Activated CD4-positive, alpha-beta T cell treated with anti-CD3 and anti-CD28 coated beads, Interleukin-2, amount 10 ng/mL, durations not matched to agents 24 days and 14 days (primary cell): ENCODE measurements at regions of chr4 and their contacts with region 1.

Region 1: DNA sequence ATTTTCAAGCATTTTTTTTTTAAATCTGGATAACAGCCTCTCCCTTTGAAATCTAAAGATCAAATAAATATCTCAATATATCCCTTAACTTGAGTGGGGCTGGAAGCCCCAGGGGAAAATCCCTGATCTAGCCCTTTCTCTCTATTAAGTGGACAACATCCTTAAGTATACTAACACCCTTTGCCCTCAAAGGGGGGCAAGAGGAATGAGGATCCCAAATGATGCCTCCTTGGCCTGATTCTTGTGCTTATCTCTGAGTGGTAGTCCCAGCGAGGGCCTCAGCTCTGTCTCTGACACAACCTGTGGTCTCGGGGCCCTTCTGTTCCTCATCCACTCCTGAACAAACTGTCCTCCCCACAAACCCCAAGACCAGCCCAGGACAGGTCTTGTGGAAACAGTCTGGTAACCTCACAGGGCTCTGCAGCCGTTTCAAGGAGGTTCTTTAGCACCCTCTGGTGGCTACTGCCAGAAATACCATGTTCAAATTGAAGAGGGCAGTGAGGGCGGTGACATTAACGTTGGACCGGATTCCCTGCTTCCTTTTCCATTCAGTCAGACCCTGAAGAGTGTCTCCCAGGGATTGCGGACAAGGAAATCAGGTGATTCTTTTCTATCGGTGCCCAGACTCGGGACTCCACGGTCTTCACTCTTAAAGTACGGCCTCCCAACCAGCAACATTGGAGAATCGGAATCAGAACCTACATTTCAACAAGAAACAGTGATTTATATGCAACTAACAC is 12.9 kb downstream of the CXCL13 start:
- DNase-seq: peak; percentile 89
- H3K4me3 Mint-ChIP-seq: no peak overlapping the region
- H3K27ac Mint-ChIP-seq: peak overlapping the region; percentile 39
- H3K4me1 Mint-ChIP-seq: peaks cover 17% of the 10 kb centered on the region
- H3K27me3 Mint-ChIP-seq: peaks cover 18% of the 10 kb centered on the region

Region 2: DNA sequence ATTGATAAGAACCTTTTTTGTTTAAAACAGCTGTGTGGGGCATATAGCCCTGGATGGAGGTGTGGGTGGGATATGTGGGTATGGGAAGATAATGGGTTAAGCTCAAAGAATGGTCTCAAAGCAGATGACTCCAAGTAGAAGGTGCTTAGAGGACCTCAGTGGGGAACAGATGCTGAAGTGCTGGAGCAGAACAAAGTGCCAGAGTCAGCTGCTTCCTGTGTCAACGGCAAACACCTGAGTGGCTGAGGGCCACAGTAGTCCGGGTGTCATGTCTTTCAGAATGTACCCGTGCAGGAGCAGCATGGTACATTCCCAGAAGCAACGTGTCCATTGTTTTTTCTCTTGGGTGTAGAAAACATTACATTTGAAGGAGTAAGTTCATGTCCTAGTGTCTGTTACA is 250.9 kb before region 1 on chr4:
- intact Hi-C with region 1: loop called (anchors 5 kb)
- DNase-seq: no peak
- H3K4me3 Mint-ChIP-seq: no peak overlapping the region
- H3K27ac Mint-ChIP-seq: no peak overlapping the region
- H3K4me1 Mint-ChIP-seq: peaks cover 2% of the 10 kb centered on the region
- H3K27me3 Mint-ChIP-seq: peaks cover 8% of the 10 kb centered on the region

Region 3: GRCh38 chr4:77385124-77385969 is 233.2 kb before region 1 on chr4:
- intact Hi-C with region 1: loop called (anchors 1 kb)
- DNase-seq: peak; percentile 86
- H3K4me3 Mint-ChIP-seq: no peak overlapping the region
- H3K27ac Mint-ChIP-seq: no peak overlapping the region
- H3K4me1 Mint-ChIP-seq: peaks cover 6% of the 10 kb centered on the region
- H3K27me3 Mint-ChIP-seq: peaks cover 4% of the 10 kb centered on the region

Region 4: GRCh38 chr4:77433418-77433733 is 185.2 kb before region 1 on chr4:
- intact Hi-C with region 1: loop called (anchors 1 kb)
- DNase-seq: peak; percentile 80
- H3K4me3 Mint-ChIP-seq: no peak overlapping the region
- H3K27ac Mint-ChIP-seq: no peak overlapping the region
- H3K4me1 Mint-ChIP-seq: peaks cover 8% of the 10 kb centered on the region
- H3K27me3 Mint-ChIP-seq: no peaks in the 10 kb centered on the region

Region 5: DNA sequence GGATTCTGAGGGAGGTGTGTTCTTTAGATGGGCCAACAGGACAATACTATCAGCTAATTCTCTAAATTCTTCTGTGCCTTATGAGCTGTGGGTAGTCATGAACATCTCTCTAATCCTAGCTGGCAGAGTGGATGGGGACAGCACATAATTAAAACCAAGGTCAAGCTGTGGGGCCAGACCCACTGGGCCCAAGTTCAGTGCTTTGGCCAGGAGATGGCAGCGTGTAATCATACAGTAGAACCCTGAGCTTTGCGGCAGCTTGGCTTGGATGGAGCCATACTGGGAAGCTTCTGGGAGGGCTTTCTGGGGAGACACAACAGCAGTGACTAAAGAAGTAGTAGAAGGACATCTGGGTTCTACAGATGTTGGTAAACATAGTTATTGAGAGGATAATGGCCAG is 153.3 kb before region 1 on chr4:
- intact Hi-C with region 1: loop called (anchors 1 kb)
- DNase-seq: peak; percentile 67
- H3K4me3 Mint-ChIP-seq: no peak overlapping the region
- H3K27ac Mint-ChIP-seq: peak overlapping the region; percentile 45
- H3K4me1 Mint-ChIP-seq: peaks cover 5% of the 10 kb centered on the region
- H3K27me3 Mint-ChIP-seq: peaks cover 8% of the 10 kb centered on the region

Region 6: GRCh38 chr4:77600521-77601451 is 17.8 kb before region 1 on chr4:
- intact Hi-C with region 1: loop called (anchors 2 kb)
- DNase-seq: peak; percentile 78
- H3K4me3 Mint-ChIP-seq: no peak overlapping the region
- H3K27ac Mint-ChIP-seq: peak overlapping the region; percentile 69
- H3K4me1 Mint-ChIP-seq: peaks cover 31% of the 10 kb centered on the region
- H3K27me3 Mint-ChIP-seq: no peaks in the 10 kb centered on the region

Region 7: GRCh38 chr4:77692847-77693432 is 74.4 kb after region 1 on chr4:
- intact Hi-C with region 1: no loop called
- DNase-seq: no peak
- H3K4me3 Mint-ChIP-seq: no peak overlapping the region
- H3K27ac Mint-ChIP-seq: no peak overlapping the region
- H3K4me1 Mint-ChIP-seq: no peaks in the 10 kb centered on the region
- H3K27me3 Mint-ChIP-seq: peaks cover 4% of the 10 kb centered on the region

Region 8: DNA sequence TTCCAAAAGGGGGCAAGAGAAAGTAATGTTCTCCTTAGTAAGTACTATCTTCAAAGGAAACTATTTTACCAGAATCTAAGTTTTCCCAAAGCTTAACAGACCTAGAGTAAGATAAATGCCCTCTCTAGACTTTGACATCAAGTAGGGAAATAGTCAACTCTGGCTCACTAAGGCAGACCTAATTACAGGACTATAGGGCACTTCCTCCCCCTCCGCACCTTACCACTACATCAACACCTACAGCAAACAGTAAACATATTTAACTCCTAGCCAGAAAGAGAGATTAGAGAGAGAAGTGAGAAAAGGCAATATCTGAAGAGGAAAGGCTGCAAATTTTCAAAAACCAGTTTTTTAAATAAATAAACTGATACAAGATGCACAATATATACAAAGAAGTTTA is 140.3 kb after region 1 on chr4:
- intact Hi-C with region 1: no loop called
- DNase-seq: no peak
- H3K4me3 Mint-ChIP-seq: no peak overlapping the region
- H3K27ac Mint-ChIP-seq: no peak overlapping the region
- H3K4me1 Mint-ChIP-seq: peaks cover 10% of the 10 kb centered on the region
- H3K27me3 Mint-ChIP-seq: no peaks in the 10 kb centered on the region

Region 9: DNA sequence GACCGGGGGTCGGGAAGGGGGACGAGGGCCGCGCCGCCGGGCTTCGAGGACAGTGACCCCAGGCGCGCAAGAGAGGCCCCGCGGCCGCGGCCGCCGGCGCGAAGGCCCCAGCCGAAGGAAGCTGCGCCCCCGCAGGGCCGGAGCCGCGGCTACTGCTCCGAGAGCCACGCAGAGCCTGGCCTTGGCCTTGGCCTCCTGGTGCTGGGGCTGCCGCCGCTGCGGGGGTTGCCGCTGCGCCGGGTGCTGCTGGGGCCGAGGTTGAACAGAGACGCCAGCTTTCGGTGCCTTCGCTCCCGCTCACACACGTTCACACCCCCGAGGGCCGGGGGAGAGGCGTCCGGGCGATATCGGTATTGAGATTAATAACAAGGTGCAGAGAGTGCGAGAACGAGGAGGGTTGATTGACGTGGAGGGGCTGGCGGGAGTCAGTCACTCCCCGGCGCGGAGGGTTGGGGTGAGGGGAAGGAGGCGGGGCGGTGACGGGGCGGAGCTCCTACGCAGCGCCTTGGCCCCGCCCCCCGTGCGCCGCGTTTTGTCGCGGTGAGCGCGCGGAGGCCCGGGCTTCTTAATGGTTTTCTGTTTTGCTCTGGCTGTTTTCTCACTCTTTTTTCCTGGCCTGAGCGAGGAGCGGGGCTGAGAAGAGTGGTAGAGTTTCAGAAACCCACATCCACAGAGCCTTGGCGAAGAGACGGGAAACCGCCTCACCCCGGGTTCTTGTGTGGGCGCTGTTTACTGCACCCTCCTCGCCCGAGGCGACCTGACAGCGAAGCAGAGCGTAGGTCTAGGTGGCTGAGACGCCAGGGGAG is 201.5 kb after region 1 on chr4:
- intact Hi-C with region 1: no loop called
- DNase-seq: peak; percentile 98
- H3K4me3 Mint-ChIP-seq: peak overlapping the region; percentile 97
- H3K27ac Mint-ChIP-seq: peak overlapping the region; percentile 100
- H3K4me1 Mint-ChIP-seq: peaks cover 38% of the 10 kb centered on the region
- H3K27me3 Mint-ChIP-seq: peaks cover 1% of the 10 kb centered on the region

Region 10: GRCh38 chr4:78032445-78033328 is 414.1 kb after region 1 on chr4:
- intact Hi-C with region 1: no loop called
- DNase-seq: no peak
- H3K4me3 Mint-ChIP-seq: no peak overlapping the region
- H3K27ac Mint-ChIP-seq: no peak overlapping the region
- H3K4me1 Mint-ChIP-seq: no peaks in the 10 kb centered on the region
- H3K27me3 Mint-ChIP-seq: peaks cover 4% of the 10 kb centered on the region